GM18951 (cell line): ENCODE measurements at regions of chr2 and their contacts with region 1.

Region 1: DNA sequence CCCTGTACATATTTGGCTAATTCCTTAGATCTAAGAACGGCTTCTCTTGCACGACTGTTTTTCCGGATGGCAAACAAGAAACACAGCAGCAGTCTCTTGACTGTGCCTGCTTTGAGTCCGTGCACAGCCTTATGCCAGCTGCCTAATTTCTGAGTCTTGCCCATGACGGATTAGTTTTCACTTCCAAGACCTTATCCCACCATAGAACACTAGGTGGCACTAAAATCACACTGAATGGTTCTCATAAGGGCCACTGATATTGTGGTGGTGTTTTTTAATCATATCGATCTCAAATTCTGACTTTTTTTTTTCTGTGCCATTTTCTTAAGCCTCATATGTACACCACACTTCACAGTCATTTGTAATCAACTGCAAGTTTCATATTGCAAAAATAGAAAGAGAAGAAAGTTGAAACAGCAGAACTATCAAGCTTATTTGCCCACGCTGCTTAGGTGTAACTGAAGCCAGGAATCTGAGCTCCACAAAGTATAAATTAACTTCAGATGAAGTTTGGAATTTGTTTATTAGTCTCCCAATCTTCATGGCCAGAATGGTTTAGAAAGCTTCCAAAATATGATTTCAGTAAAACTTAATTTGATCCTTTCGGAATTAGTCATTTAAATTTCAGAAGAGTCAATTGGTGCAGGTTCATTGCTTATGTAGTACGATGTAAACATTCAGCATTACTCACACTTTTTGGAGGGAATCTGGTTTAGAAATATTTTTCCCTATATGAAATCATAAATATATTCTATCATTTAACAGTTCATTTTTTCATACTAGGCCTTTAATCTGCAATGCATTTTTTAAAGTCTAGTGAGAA is 45.5 kb upstream of the SCN7A start:
- POLR2A ChIP-seq: no peak

Region 2: GRCh38 chr2:167964650-167965413 is 1425.3 kb after region 1 on chr2:
- in situ Hi-C with region 1: loop called (anchors 25 kb)
- POLR2A ChIP-seq: no peak

Region 3: DNA sequence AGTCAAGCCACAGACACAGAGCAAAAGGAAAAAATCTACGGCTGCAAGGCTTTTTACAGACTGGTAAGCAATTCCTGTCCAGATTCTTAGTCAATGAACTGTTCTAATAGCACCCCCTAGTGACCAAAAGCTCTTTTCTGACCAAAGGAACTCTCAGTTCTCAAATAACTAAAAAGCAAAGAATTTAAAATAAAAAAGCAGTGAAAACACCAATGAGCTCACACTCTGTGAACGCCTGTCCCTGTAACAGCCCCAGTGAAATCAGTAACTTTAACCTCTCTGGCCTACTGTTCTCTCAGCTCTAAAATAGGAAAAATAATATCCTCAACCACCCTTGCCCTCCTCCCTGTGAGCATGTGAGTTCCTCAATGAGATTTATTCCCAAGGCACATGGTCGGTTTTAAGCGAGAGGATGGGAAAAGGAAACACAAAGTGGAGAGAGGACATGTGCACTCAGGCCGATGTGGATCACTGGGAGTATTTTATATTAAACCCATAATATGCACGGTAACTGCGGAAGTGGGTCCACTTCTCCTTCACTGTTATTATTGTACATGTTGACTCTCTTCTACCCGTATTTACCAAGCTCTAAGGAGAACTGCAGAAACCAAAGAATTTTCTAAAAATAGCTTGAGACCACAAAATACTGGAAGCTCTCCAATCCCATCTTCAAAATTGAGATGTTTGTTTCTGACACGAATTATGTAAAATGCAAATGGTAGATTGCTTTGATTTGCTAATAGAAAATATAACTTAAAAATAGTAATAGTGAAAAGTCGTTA is 1579.4 kb after region 1 on chr2:
- in situ Hi-C with region 1: loop called (anchors 25 kb)
- POLR2A ChIP-seq: no peak